ENCODE measurements at regions of chr1 and their contacts with region 1.

Region 1: GRCh38 chr1:27392096-27392777 is at the start of gene GPR3:
- DNase-seq: peak; percentile 92 to 93
- ATAC-seq: peak; percentile 87 to 92 (median 90)
- H3K4me3 ChIP-seq: peak within 1 kb of the TSS; percentile 26 to 69 (median 55)
- H3K27ac ChIP-seq: peak within 1 kb of the TSS; percentile 5 to 82 (median 76)
- H3K4me1 ChIP-seq: peaks cover 7 to 50% (median 36%) of the 10 kb centered on the region in 9 donors
- H3K27me3 ChIP-seq: no peaks in the 10 kb centered on the region
- CTCF ChIP-seq: peak; percentile 22 to 79 (median 58)
- total RNA-seq, gene GPR3: 0.27 to 2.0 (median 0.42) TPM in 9 of 10 donors, not detected in the other

Region 2: DNA sequence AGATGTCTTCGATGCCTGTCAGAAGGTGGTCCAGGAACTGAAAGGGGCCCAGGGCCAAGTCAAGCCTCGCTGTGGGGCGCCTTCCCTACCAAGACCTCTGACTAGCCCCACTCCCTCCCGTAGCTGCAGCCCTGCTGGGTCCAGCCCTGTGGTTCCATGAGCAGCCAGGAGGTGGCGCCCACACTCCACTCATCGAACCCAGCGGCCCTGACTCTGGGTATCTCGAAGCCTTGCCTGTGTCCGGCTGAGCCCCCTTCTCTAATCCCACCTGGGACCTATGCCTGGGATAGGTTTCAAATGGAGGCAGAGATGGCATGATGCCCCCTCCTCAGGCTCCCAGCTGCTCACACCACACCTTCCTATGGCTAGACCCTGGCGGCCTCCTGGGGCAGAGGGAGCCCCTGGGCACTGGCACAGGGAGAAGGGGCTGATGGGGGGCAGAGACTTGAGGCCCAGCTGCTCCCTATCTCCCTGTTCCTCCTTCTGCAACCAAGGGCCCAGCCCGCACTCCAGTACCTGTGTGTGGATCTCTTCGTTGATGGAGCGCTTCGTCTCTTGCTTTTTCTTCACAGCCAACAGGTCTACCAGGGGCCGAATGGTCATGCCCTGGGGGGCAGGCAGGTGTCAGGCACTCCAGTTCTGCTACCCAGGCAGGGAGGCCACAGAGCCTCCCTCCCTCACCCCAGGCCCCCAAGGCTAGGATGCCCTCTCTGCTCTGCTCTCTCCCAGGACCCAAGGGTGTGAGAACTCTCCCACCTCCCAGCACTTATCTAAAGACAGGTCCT is 289.3 kb before region 1 on chr1:
- intact Hi-C with region 1: loop called in 3 of 10 experiments (anchors 10 kb)
- DNase-seq: peak; percentile 75 to 85
- ATAC-seq: peak; percentile 31 to 65 (median 50)
- H3K4me3 ChIP-seq: no peak overlapping the region
- H3K27ac ChIP-seq: no peak overlapping the region
- H3K4me1 ChIP-seq: peaks cover 14 to 36% (median 26%) of the 10 kb centered on the region in 9 donors
- H3K27me3 ChIP-seq: no peaks in the 10 kb centered on the region
- CTCF ChIP-seq: peak; percentile 94 to 98 (median 97)

Region 3: GRCh38 chr1:27300341-27301051 is 91.7 kb before region 1 on chr1:
- intact Hi-C with region 1: loop called in 9 of 10 experiments (anchors 1 to 5 kb)
- DNase-seq: peak; percentile 78 to 84
- ATAC-seq: peak; percentile 79 to 93 (median 88)
- H3K4me3 ChIP-seq: no peak overlapping the region
- H3K27ac ChIP-seq: peak overlapping the region; percentile 65 to 88 (median 82)
- H3K4me1 ChIP-seq: peaks cover 11 to 47% (median 30%) of the 10 kb centered on the region in 9 donors
- H3K27me3 ChIP-seq: no peaks in the 10 kb centered on the region
- CTCF ChIP-seq: peak; percentile 95 to 99 (median 99)

Region 4: DNA sequence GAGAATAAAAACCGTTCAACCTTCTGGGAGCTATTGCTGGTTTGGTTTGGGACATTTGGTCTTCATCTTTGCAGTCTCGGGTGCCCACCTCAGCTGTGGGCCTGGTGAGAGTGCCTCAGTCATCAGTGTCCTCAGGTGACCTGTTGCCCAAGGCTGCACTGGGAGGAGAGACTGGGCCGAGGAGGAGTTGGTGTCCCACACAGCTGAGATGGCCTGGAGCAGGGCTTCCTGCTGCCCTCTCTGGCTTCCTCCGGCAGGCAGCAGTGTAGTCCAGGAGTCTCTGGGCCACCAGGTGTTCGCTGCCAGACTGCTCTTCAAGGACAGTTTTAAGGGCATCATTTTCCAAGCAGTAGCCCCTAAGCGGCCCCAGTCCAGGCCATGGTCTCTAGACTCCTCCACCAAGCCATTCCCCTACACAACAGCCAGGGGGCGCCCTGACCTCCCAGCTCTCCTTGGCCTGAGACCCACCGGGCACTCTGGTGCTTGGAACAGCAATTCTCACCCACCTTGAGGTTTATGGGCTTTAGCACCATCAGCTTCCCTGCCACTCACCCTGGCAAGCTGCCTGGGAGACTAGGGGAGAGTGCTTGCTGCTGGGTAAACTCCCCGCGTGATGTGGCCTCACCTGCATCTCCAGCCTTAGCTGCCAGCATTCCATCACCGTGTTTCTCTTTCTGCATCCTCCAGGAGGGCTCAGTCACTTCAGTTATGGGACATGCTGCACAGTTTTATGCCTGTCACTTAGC is 59.5 kb before region 1 on chr1:
- intact Hi-C with region 1: loop called in 1 of 10 experiments (anchors 2 kb)
- DNase-seq: peak; percentile 33 to 56
- ATAC-seq: peak; percentile 37 to 69 (median 60)
- H3K4me3 ChIP-seq: no peak overlapping the region
- H3K27ac ChIP-seq: peak overlapping the region in 7 of 10 donors; percentile 20 to 67 (median 43)
- H3K4me1 ChIP-seq: peaks cover 12 to 40% (median 30%) of the 10 kb centered on the region in 9 donors
- H3K27me3 ChIP-seq: no peaks in the 10 kb centered on the region
- CTCF ChIP-seq: peak; percentile 70 to 87 (median 78)

Region 5: DNA sequence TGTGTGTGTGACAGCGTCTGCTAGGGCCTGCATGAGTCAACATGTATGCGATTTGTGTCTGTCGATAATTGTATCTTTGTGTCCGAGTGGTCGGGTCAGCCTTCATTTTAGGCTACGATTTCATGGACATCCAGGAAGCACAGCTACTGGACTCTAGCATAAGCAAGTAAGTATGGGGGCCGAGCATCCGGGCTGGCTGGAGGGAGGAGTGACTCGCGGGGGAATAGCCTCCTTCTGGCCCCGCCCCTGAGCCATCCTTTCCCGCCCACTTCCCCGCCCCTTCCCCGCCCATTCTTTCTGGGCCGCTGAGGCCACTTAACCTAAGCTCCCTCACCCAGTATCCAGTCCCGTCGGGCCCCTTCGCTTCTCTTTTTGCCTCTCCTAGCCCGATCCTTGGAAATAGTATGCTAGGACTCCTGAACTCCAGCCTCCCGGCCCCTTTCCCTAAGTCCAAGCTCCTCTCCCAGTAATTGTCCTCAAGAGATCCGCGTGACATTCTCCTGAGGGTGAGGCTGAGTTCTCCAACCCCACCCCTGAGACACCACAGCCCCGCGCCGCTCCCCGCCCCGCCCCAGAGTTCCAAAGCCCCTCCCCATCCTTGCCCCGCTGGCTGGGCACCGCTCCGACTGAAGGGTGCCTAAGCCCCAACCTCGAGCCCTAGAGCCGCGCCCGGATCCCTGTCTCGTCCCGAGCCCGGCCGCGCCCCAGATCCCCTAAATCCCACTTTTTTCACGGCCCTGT is 26.7 kb before region 1 on chr1:
- intact Hi-C with region 1: loop called in 2 of 10 experiments (anchors 1 to 2 kb)
- DNase-seq: peak; percentile 90 to 92
- ATAC-seq: peak; percentile 75 to 90 (median 83)
- H3K4me3 ChIP-seq: peak overlapping the region; percentile 45 to 90 (median 77)
- H3K27ac ChIP-seq: peak overlapping the region; percentile 97 to 100 (median 98)
- H3K4me1 ChIP-seq: peaks cover 25 to 66% (median 43%) of the 10 kb centered on the region in 9 donors
- H3K27me3 ChIP-seq: no peaks in the 10 kb centered on the region
- CTCF ChIP-seq: no peak

Measured in heart right ventricle (tissue), 16 donors.